Activated CD4-positive, alpha-beta T cell treated with anti-CD3 and anti-CD28 coated beads for 36 hours (primary cell): ENCODE measurements at regions of chr3 and their contacts with region 1.

Region 1: GRCh38 chr3:195348426-195349118 is 77.6 kb upstream of the XXYLT1 start:
- DNase-seq: no peak
- ATAC-seq: no peak
- H3K4me3 Mint-ChIP-seq: no peak overlapping the region
- H3K27ac Mint-ChIP-seq: no peak overlapping the region
- H3K4me1 Mint-ChIP-seq: peaks cover 2% of the 10 kb centered on the region
- H3K27me3 Mint-ChIP-seq: no peaks in the 10 kb centered on the region

Region 2: GRCh38 chr3:195461594-195462307 is 113.2 kb after region 1 on chr3:
- CTCF ChIA-PET with region 1: no interaction called
- POLR2A ChIA-PET with region 1: no interaction called
- intact Hi-C with region 1: loop called in 1 of 2 experiments (anchors 5 kb)
- DNase-seq: no peak
- ATAC-seq: no peak
- H3K4me3 Mint-ChIP-seq: no peak overlapping the region
- H3K27ac Mint-ChIP-seq: no peak overlapping the region
- H3K4me1 Mint-ChIP-seq: peaks cover 9% of the 10 kb centered on the region
- H3K27me3 Mint-ChIP-seq: no peaks in the 10 kb centered on the region

Region 3: GRCh38 chr3:195876297-195877031 is 527.9 kb after region 1 on chr3:
- CTCF ChIA-PET with region 1: no interaction called
- POLR2A ChIA-PET with region 1: no interaction called
- intact Hi-C with region 1: no loop called
- DNase-seq: peak; percentile 29
- ATAC-seq: peak; percentile 68
- H3K4me3 Mint-ChIP-seq: no peak overlapping the region
- H3K27ac Mint-ChIP-seq: no peak overlapping the region
- H3K4me1 Mint-ChIP-seq: no peaks in the 10 kb centered on the region
- H3K27me3 Mint-ChIP-seq: no peaks in the 10 kb centered on the region

Region 4: DNA sequence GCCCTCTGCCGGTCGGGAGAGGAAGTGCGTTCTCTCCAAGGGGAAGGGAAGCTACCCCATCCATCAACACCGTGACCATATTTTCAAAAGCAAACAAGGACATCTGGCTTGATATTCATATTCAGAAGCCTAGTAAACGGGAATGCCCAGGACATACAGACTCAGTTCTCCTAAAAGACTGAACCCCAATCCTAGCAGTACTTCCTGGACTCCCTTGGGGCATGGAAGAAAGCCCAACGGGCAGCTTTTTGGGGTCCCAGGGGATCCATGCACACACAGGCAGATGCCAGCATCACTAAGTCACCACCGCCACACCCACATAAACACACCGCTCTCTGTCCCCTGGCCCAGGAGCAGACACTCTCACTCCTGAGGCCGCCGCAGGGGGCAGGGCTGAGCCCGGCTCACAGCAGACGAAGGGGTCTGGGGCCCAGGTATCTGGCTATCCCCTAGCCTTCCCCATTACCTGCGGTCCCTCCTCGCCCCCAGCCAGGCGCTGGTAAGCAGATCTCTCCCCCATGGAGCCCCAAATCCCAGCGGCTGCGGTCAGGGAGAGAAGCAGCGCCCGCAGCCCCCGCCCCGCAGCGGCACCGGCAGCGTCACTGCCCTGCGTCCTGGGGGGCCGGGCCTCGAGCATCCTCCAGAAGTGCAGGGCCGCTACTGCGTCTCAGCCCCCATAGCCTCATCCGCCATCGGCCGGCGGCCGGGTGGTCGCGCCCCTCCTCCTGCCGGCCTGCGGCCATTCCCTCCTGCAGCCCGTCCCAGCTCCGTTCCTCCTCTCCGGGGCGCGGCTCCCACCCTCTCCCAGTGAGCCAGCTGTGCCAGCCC is 546.4 kb after region 1 on chr3:
- CTCF ChIA-PET with region 1: no interaction called
- POLR2A ChIA-PET with region 1: no interaction called
- intact Hi-C with region 1: no loop called
- DNase-seq: peak; percentile 86
- ATAC-seq: peak; percentile 79
- H3K4me3 Mint-ChIP-seq: peak overlapping the region; percentile 83
- H3K27ac Mint-ChIP-seq: peak overlapping the region; percentile 88
- H3K4me1 Mint-ChIP-seq: peaks cover 42% of the 10 kb centered on the region
- H3K27me3 Mint-ChIP-seq: no peaks in the 10 kb centered on the region